ENCODE measurements at regions of chr6 and their contacts with region 1.

Region 1: DNA sequence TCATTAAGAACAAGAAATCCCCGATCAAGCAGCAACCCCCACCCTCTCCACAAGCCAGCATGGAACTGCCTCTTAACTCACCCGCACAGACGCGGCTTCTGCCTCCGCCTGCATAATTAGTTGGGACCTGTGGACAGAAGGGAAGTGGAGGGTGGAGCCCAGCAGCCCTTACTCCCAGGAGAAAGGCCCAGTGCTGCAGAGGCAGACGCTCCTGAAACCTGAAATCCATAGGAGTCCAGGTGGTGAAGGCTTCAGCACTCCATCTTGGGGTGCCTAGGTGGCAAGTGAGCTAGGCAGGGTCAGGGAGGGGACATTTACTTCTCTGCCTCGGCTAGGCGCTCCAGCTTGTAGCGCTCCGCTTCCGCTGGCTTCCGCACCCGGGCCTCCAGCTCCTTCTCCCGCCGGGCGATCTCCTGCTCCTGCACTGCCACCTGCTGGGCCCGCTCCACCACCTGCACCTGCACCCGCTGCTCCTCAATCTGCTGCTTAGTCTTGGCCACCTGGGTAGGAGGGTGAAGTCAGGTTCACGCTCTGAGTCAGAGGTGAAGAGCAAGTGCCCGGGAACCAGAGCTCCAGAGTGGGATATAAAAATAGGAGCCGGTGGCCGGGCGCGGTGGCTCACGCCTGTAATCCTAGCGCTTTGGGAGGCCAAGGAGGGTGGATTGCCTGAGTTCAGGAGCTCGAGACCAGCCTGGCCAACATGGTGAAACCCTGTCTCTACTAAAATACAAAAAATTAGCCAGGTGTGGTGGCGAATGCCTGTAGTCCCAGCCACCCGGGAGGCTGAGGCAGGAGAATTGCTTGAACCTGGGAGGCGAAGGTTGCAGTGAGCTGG is 10.7 kb downstream of the TUBB start:
- H3K4me3 ChIP-seq: no peak overlapping the region
- H3K27ac ChIP-seq: no peak overlapping the region
- H3K4me1 ChIP-seq: peaks cover 4% of the 10 kb centered on the region
- CTCF ChIP-seq: peak; percentile 91

Region 2: GRCh38 chr6:30541515-30542403 is 189.1 kb before region 1 on chr6:
- CTCF ChIA-PET with region 1: interaction called, 30 read pairs
- POLR2A ChIA-PET with region 1: no interaction called
- H3K4me3 ChIP-seq: peak overlapping the region; percentile 34
- H3K27ac ChIP-seq: no peak overlapping the region
- H3K4me1 ChIP-seq: no peaks in the 10 kb centered on the region
- CTCF ChIP-seq: peak; percentile 79

Region 3: DNA sequence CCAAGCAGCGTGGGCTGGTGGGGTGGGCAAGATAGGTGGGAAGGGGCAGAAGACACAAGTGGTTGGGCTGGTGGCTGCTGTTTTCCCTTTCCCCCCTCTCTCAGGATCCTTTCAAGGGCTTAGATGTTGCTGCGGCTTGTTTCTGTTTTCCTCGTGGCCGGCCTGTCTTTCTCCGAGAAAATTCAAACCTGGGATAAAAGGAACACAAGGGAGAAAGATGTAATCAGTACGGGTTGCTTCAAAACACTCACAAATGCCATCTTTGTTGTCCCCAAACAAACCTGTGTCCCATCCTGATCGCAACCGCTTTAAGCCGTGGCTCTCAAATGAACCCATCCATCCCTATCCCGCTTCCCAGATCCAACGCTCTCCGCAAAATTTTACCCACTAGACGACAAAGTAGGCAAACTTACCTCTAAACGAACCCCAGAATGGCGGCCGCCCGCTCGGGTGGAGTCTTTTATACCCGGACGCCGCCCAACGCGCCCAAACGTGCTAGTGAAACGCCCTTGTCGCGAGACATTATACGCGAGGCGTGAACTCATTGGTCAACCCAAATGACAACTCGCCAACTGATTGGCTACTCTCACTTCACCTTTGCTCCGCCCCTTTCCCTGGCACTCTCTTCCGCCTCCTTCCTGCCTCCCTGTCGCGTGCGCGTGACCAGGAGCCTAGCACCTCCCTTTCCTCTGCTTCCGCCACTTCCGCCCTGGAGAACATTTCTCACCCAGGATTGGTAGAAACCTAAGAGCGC is 113.8 kb before region 1 on chr6 and contains the start of gene PPP1R10:
- CTCF ChIA-PET with region 1: interaction called, 17 read pairs
- POLR2A ChIA-PET with region 1: interaction called, 35 read pairs
- H3K4me3 ChIP-seq: peak within 1 kb of the TSS; percentile 91
- H3K27ac ChIP-seq: peak within 1 kb of the TSS; percentile 88
- H3K4me1 ChIP-seq: peaks cover 18% of the 10 kb centered on the region
- CTCF ChIP-seq: 0 out of 2 replicates have a peak, but pooled peaks have one; percentile 17

Region 4: DNA sequence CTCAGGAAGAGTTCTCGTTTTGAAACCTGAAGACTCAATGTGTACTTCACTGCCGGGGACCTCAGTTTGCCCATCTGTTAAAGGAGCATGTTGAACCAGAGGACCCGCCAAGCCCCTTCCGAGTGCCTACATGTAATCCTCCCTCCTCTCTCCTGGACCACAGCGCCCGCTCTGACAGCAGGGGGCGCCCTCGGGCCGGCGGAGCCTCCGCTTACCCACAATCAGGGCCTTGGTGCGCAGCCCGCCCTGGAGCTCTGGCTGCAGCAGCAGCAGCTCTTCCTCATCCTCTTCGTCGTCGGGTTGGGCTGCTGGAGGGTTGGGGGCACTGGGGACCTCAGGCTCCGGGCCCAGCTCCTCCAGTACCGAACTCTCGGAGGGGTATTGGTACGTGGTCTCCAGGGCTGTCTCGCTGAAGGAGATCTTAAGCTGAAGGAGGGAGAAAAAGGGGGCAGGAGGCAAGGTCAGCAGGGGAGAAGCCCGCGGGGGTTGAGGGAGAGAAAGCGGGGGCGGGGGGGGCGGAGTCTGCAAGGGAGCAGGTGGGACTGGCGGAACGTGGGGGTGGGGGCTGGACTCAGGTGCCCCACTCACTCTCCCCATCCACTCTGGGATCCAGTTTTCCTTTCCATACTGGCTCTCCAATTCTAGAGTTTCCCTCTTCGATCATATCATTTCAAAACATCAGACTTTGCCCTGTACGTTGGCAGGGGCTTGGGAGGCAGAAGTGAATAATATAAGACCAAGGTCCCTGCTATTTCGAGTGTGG is 51.7 kb before region 1 on chr6:
- CTCF ChIA-PET with region 1: interaction called, 692 read pairs
- POLR2A ChIA-PET with region 1: interaction called, 61 read pairs
- H3K4me3 ChIP-seq: no peak overlapping the region
- H3K27ac ChIP-seq: no peak overlapping the region
- H3K4me1 ChIP-seq: peaks cover 19% of the 10 kb centered on the region
- CTCF ChIP-seq: peak; percentile 90

Region 5: GRCh38 chr6:30742316-30743098 is 11.7 kb after region 1 on chr6 and contains the start of gene FLOT1:
- CTCF ChIA-PET with region 1: interaction called, 22 read pairs
- POLR2A ChIA-PET with region 1: interaction called, 39 read pairs
- H3K4me3 ChIP-seq: peak within 1 kb of the TSS; percentile 67
- H3K27ac ChIP-seq: peak within 1 kb of the TSS; percentile 94
- H3K4me1 ChIP-seq: no peaks in the 10 kb centered on the region
- CTCF ChIP-seq: no peak

Region 6: DNA sequence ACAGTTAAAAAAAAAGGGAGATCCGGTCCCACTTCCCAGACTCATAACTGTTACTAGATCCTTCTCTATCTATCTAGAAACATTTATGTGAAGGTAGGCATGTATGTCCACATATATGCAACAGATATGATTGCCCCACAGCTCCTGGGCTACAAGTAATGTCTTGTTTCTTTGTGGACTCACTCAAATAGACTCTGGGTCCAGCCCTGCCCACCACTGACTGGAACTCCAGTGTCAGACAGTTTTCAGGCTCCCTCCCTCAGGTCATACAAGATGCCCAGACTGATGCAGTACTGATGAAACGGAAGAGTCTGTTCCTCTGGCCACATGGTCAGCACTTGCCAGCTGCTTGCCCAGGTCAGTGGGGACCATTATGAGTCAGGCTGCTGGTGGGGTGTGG is 44.3 kb after region 1 on chr6:
- CTCF ChIA-PET with region 1: interaction called, 10 read pairs
- POLR2A ChIA-PET with region 1: interaction called, 11 read pairs
- H3K4me3 ChIP-seq: no peak overlapping the region
- H3K27ac ChIP-seq: no peak overlapping the region
- H3K4me1 ChIP-seq: no peaks in the 10 kb centered on the region; the same call in 1 of the 2 replicates
- CTCF ChIP-seq: no peak

Region 7: GRCh38 chr6:30877419-30878371 is 146.9 kb after region 1 on chr6:
- CTCF ChIA-PET with region 1: interaction called, 21 read pairs
- POLR2A ChIA-PET with region 1: interaction called, 17 read pairs
- H3K4me3 ChIP-seq: peak overlapping the region; percentile 20
- H3K27ac ChIP-seq: no peak overlapping the region; the same call in 1 of the 2 replicates
- H3K4me1 ChIP-seq: no peaks in the 10 kb centered on the region; the same call in 1 of the 2 replicates
- CTCF ChIP-seq: peak; percentile 89